ENCODE measurements at regions of chr1 and their contacts with region 1.

Region 1: GRCh38 chr1:81158592-81158991 is 642.1 kb upstream of the ADGRL2 start:
- DNase-seq: peak; percentile 75
- ATAC-seq: peak; percentile 78
- H3K4me3 ChIP-seq: no peak overlapping the region
- H3K27ac ChIP-seq: peak overlapping the region; percentile 82; the same call in 1 of the 2 replicates
- H3K4me1 ChIP-seq: peaks cover 15% of the 10 kb centered on the region
- H3K27me3 ChIP-seq: no peaks in the 10 kb centered on the region
- CTCF ChIP-seq: no peak
- POLR2A ChIP-seq: no peak
- RAD21 ChIP-seq: no peak

Region 2: DNA sequence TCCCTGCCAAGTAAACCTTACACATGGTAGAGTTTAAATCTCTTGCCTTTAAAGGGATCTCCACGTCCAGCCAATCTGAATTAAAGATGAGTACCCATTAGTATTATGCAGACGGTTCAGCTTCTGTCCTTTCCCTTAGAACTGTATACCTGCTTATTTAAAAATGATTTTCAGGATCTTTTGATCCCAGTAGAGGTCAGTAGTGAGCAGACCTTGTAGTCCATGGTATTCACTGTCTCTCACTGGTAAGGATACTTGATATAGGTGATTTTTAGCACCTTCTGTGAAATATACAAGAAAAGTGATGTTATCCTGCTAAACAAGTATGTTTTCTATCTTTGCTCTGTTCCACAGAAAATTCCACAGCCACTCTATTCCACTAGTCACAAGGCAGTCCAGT is 940.5 kb before region 1 on chr1:
- CTCF ChIA-PET with region 1: no interaction called
- POLR2A ChIA-PET with region 1: no interaction called
- dilution Hi-C with region 1: no loop called
- in situ Hi-C with region 1: no loop called
- intact Hi-C with region 1: loop called (anchors 5 kb)
- DNase-seq: peak; percentile 59
- ATAC-seq: peak; percentile 85
- H3K4me3 ChIP-seq: no peak overlapping the region
- H3K27ac ChIP-seq: no peak overlapping the region
- H3K4me1 ChIP-seq: no peaks in the 10 kb centered on the region
- H3K27me3 ChIP-seq: no peaks in the 10 kb centered on the region
- CTCF ChIP-seq: peak; percentile 58
- POLR2A ChIP-seq: no peak
- RAD21 ChIP-seq: peak; percentile 57

Region 3: DNA sequence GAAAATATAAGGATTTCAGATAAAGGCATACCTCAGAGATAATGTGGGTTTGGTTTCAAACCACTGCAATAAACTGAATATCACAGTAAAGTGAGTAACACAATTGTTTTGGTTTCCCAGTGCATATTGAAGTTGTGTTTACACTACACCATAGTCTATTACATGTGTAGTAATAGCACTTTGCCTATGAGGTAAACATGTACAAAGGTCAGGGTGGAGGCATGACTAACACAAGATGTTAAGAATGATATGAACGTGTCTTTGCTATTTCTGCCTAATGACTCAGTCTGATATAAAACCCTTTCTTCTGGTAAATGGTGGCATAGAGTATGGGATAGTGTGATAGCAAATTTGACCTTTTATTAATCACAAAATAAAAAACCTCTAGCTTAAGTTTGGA is 20.6 kb after region 1 on chr1:
- CTCF ChIA-PET with region 1: no interaction called
- POLR2A ChIA-PET with region 1: no interaction called
- dilution Hi-C with region 1: no loop called
- in situ Hi-C with region 1: no loop called
- intact Hi-C with region 1: loop called (anchors 2 kb)
- DNase-seq: peak; percentile 99
- ATAC-seq: peak; percentile 98
- H3K4me3 ChIP-seq: no peak overlapping the region
- H3K27ac ChIP-seq: peak overlapping the region; percentile 87; the same call in 1 of the 2 replicates
- H3K4me1 ChIP-seq: peaks cover 5% of the 10 kb centered on the region
- H3K27me3 ChIP-seq: no peaks in the 10 kb centered on the region
- CTCF ChIP-seq: no peak
- POLR2A ChIP-seq: no peak
- RAD21 ChIP-seq: peak; percentile 11; the same call in 1 of the 2 replicates

Measured in IMR-90 (cell line).